Activated CD4-positive, alpha-beta T cell treated with anti-CD3 and anti-CD28 coated beads for 36 hours (primary cell): ENCODE measurements at regions of chr10 and their contacts with region 1.

Region 1: GRCh38 chr10:15370856-15371701 is at the start of gene FAM171A1:
- DNase-seq: peak; percentile 85
- ATAC-seq: peak; percentile 82
- H3K4me3 Mint-ChIP-seq: peak within 1 kb of the TSS; percentile 67
- H3K27ac Mint-ChIP-seq: peak within 1 kb of the TSS; percentile 68
- H3K4me1 Mint-ChIP-seq: peaks cover 16% of the 10 kb centered on the region
- H3K27me3 Mint-ChIP-seq: peaks cover 14% of the 10 kb centered on the region
- total RNA-seq, gene FAM171A1: 4.1 to 5.8 TPM

Region 2: GRCh38 chr10:15254808-15255648 is 116.1 kb before region 1 on chr10:
- CTCF ChIA-PET with region 1: interaction called, 3 read pairs
- POLR2A ChIA-PET with region 1: no interaction called
- intact Hi-C with region 1: loop called in 1 of 2 experiments (anchors 5 kb)
- DNase-seq: peak; percentile 57
- ATAC-seq: peak; percentile 81
- H3K4me3 Mint-ChIP-seq: peak overlapping the region; percentile 77
- H3K27ac Mint-ChIP-seq: peak overlapping the region; percentile 72
- H3K4me1 Mint-ChIP-seq: peaks cover 31% of the 10 kb centered on the region
- H3K27me3 Mint-ChIP-seq: no peaks in the 10 kb centered on the region

Region 3: DNA sequence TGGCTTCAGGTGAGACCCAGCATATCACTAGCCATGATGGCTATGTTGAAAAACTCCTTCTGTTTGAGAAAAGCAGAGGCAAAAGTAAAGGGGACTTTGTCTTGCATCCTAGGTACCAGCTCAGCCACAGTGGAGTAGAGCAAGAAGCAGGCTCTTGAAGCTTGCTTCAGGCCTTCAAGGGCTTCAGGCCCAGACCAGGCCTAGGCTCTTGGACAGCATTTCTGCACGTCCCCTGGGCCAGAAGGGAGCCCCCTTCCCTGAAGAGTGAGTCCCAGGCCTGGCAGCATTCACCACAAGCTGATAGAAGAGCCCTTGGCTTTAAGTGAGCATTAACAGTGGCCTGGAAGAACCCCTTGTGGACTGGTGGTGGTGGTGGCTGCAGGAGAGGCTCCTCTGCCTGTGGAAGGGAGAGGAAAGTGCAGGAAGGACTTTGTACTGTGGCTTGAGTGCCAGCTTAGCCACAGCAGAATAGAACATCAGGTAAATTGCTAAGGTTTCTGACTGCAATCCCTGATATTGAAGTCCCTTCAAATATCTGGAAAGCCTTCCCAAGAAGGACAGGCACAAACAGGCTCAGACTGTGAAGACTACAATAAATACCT is 28.1 kb after region 1 on chr10:
- CTCF ChIA-PET with region 1: no interaction called
- POLR2A ChIA-PET with region 1: no interaction called
- intact Hi-C with region 1: no loop called
- DNase-seq: no peak
- ATAC-seq: no peak
- H3K4me3 Mint-ChIP-seq: no peak overlapping the region
- H3K27ac Mint-ChIP-seq: no peak overlapping the region
- H3K4me1 Mint-ChIP-seq: no peaks in the 10 kb centered on the region
- H3K27me3 Mint-ChIP-seq: no peaks in the 10 kb centered on the region